ENCODE measurements at regions of chr22 and their contacts with region 1.

Region 1: GRCh38 chr22:23054531-23055257 is 15.6 kb upstream of the GNAZ start:
- DNase-seq: no peak
- ATAC-seq: peak; percentile 83
- H3K4me3 ChIP-seq: no peak overlapping the region
- H3K4me3 Mint-ChIP-seq: peak overlapping the region; percentile 64
- H3K27ac ChIP-seq: no peak overlapping the region
- H3K27ac Mint-ChIP-seq: peak overlapping the region; percentile 90
- H3K4me1 ChIP-seq: peaks cover 16 to 27% of the 10 kb centered on the region in 2 donors
- H3K4me1 Mint-ChIP-seq: peaks cover 36% of the 10 kb centered on the region
- H3K27me3 ChIP-seq: no peaks in the 10 kb centered on the region
- H3K27me3 Mint-ChIP-seq: no peaks in the 10 kb centered on the region
- CTCF ChIP-seq: no peak

Region 2: DNA sequence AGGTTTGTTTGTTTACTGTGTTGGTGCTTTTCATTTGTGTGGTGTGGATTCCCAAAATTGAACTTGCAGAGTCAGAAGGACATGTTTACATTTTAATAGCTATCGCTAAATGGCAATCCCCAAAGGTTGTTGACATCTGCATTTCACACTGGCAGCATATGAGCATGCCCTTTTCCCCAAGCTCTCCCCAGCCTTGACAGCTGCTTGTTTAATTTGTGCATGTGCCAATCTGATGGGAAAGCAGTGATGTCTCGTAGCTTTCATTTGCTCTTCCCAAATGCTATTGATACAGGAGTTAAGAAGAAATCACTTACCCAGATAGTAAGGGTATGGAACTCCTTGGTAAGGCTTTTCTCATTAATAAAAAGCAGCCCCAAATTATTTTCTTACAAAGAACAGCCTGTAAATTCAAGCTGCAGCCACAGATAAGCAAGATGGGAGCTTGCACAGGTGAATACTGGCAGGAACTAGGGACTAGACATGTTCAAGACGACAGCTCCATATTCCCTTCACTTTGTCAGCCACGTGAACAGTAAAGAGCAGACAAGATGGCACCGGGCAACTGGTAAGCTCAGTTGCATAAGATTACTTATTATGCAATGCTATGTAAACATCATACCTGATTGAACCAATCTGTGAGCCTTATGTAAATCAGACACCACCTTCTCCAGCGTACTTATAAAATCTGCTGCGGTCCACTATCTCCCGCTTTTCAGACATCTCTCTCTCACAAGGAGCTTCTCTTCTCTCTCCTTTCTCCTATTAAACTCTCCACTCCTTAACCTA is 79.7 kb before region 1 on chr22:
- CTCF ChIA-PET with region 1: no interaction called
- POLR2A ChIA-PET with region 1: no interaction called
- intact Hi-C with region 1: no loop called
- DNase-seq: no peak
- ATAC-seq: no peak
- H3K4me3 ChIP-seq: no peak overlapping the region
- H3K4me3 Mint-ChIP-seq: no peak overlapping the region
- H3K27ac ChIP-seq: no peak overlapping the region
- H3K27ac Mint-ChIP-seq: no peak overlapping the region
- H3K4me1 ChIP-seq: no peaks in the 10 kb centered on the region
- H3K4me1 Mint-ChIP-seq: peaks cover 7% of the 10 kb centered on the region
- H3K27me3 ChIP-seq: no peaks in the 10 kb centered on the region
- H3K27me3 Mint-ChIP-seq: peaks cover 29% of the 10 kb centered on the region
- CTCF ChIP-seq: no peak

Region 3: DNA sequence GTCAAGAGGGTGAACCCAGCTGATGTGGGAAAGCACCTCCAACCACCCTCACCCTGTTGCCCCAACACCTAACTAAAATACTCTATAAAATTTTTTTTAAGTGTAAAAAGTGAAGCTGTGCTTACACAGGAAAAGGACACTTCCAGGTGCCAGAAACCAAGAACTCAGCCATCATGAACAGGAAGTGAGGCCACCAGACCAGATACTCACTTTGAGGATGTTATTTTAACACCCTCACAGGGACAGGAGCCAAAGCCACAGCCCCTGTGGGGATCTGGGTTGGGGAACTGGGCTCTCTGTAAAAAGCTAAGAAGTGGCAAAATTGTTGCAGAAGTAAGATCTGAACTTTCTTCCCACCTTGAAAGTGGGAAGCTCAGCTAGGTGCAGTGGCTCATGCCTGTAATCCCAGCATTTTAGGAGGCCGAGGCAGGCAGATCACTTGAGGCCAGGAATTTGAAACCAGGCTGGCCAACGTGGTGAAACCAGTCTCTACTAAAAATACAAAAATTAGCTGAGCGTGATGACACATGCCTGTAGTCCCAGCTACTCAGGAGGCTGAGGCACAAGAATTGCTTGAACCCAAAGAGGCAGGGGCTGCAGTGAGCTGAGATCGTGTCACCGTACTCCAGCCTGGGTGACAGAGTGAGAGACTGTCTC is 83.3 kb after region 1 on chr22:
- CTCF ChIA-PET with region 1: no interaction called
- POLR2A ChIA-PET with region 1: no interaction called
- intact Hi-C with region 1: loop called (anchors 10 kb)
- DNase-seq: peak; percentile 89
- ATAC-seq: peak; percentile 50
- H3K4me3 ChIP-seq: peak overlapping the region in 1 of 5 experiments; percentile 21
- H3K4me3 Mint-ChIP-seq: peak overlapping the region; percentile 65
- H3K27ac ChIP-seq: peak overlapping the region; percentile 89 to 91
- H3K27ac Mint-ChIP-seq: peak overlapping the region; percentile 89
- H3K4me1 ChIP-seq: peaks cover 59 to 72% of the 10 kb centered on the region in 2 donors
- H3K4me1 Mint-ChIP-seq: peaks cover 54% of the 10 kb centered on the region
- H3K27me3 ChIP-seq: no peaks in the 10 kb centered on the region
- H3K27me3 Mint-ChIP-seq: no peaks in the 10 kb centered on the region
- CTCF ChIP-seq: no peak